Heart left ventricle (tissue), 16 donors: ENCODE measurements at regions of chr1 and their contacts with region 1.

Region 1: DNA sequence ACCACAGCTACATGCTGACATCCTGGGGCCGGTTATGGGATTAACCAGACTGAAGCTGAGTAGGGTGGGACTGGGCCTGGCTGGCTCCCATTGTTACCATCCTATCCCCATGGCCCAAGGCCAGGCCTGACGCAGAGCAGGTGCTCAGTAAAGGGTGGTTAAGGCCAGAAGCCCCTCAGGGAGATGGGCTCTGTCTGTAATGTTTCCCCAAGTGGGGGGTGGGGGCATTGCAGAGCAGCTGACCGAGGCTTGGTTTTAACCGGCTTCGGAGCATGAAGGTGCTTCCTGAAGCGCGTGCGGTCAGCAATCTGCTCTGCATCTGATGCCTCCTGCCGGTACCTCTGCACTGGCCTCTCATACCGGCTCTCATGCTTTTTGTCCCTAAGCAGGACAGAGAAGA is 83.4 kb upstream of the ACTL8 start:
- DNase-seq: no peak
- ATAC-seq: no peak
- H3K4me3 ChIP-seq: no peak overlapping the region
- H3K27ac ChIP-seq: no peak overlapping the region
- H3K4me1 ChIP-seq: peaks cover 0 to 45% (median 19%) of the 10 kb centered on the region in 12 donors
- H3K27me3 ChIP-seq: no peaks in the 10 kb centered on the region
- CTCF ChIP-seq: no peak
- POLR2A ChIP-seq: no peak

Region 2: DNA sequence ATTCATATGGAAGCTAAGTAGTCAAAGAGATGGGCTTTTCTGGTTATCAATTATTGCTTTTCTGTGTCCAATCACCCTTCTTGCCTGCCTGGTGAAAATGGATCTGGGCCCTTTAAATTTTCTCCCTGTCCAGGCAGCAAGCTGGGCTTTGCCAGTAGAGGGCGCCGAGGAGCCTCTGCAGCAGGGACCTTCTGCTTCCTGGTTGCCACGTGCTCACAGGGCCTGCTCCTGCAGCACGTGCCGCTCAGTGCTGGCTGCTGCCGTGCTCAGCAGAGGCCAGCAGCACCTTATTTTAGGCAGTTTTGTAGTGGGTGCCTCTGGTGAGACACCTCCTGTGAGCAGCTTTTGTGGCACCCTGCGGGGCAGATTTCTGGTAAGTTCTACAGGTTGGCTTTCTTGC is 87.4 kb after region 1 on chr1:
- intact Hi-C with region 1: no loop called
- DNase-seq: peak in 1 of 5 donors; percentile 26
- ATAC-seq: no peak
- H3K4me3 ChIP-seq: no peak overlapping the region
- H3K27ac ChIP-seq: no peak overlapping the region
- H3K4me1 ChIP-seq: no peaks in the 10 kb centered on the region
- H3K27me3 ChIP-seq: peaks cover 0 to 3% (median 0%) of the 10 kb centered on the region in 9 donors
- CTCF ChIP-seq: no peak
- POLR2A ChIP-seq: no peak

Region 3: GRCh38 chr1:17831619-17832018 is 159.9 kb after region 1 on chr1:
- intact Hi-C with region 1: loop called in 5 of 10 experiments (anchors 5 to 10 kb)
- DNase-seq: peak in 3 of 5 donors; percentile 15 to 48 (median 29)
- ATAC-seq: no peak
- H3K4me3 ChIP-seq: no peak overlapping the region
- H3K27ac ChIP-seq: no peak overlapping the region
- H3K4me1 ChIP-seq: peaks cover 0 to 9% (median 0%) of the 10 kb centered on the region in 12 donors
- H3K27me3 ChIP-seq: peaks cover 0 to 15% (median 0%) of the 10 kb centered on the region in 9 donors
- CTCF ChIP-seq: no peak
- POLR2A ChIP-seq: no peak

Region 4: GRCh38 chr1:17909634-17910033 is 237.9 kb after region 1 on chr1:
- intact Hi-C with region 1: loop called in 4 of 10 experiments (anchors 5 to 10 kb)
- DNase-seq: no peak
- ATAC-seq: peak; percentile 48 to 77 (median 64)
- H3K4me3 ChIP-seq: no peak overlapping the region
- H3K27ac ChIP-seq: no peak overlapping the region
- H3K4me1 ChIP-seq: no peaks in the 10 kb centered on the region
- H3K27me3 ChIP-seq: peaks cover 0 to 18% (median 7%) of the 10 kb centered on the region in 9 donors
- CTCF ChIP-seq: peak in 9 of 12 donors; percentile 14 to 49 (median 37)
- POLR2A ChIP-seq: no peak